ENCODE measurements at regions of chr12 and their contacts with region 1.

Region 1: DNA sequence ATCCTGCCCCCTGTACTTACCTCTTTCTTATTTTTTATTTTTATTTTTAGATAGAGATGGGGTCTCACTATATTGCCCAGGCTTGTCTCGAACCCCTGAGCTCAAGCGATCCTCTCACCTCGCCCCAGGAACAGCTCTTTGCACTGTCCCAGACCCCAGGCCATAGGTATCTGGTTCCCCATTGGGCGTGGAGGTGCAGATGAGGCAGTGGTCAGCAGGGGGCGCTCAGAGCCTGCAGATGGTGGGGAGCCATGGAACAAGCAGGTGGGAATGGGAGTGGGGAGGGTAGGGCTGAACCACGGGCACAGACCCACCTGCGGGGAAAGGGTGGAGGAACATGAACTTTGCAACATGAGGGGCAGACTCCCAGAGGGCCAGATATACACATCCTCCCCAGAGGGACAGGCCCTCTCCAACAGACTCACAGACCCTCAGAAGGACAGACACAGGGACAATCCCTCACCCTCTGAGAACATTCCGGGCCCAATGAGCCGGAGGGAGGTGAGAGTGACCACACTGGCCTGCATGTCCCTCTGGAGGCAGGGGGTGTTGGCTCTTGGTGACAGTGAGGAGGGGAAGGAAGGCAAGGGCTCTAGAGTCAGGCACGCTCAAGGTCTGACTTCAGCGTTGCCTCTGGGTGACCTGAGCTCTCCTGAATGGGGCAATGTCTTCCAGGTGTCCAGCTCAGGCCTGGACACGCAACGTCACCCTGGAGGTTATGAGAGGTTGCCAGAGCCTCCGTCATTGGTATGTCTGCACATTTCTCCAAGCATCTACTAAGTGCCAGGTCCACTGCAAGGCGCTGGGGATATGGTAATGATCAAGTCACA is 34.9 kb downstream of the KRT80 start:
- DNase-seq: no peak
- H3K4me3 ChIP-seq: no peak overlapping the region
- H3K27ac ChIP-seq: no peak overlapping the region
- H3K27me3 ChIP-seq: no peaks in the 10 kb centered on the region
- CTCF ChIP-seq: peak; percentile 96

Region 2: GRCh38 chr12:51827925-51828818 is 328.8 kb before region 1 on chr12:
- CTCF ChIA-PET with region 1: no interaction called
- POLR2A ChIA-PET with region 1: no interaction called
- DNase-seq: no peak
- H3K4me3 ChIP-seq: no peak overlapping the region
- H3K27ac ChIP-seq: no peak overlapping the region
- H3K27me3 ChIP-seq: peaks cover 6% of the 10 kb centered on the region
- CTCF ChIP-seq: no peak

Region 3: GRCh38 chr12:52221912-52222457 is 65.0 kb after region 1 on chr12:
- CTCF ChIA-PET with region 1: interaction called, 10 read pairs
- POLR2A ChIA-PET with region 1: no interaction called
- DNase-seq: no peak
- H3K4me3 ChIP-seq: no peak overlapping the region
- H3K27ac ChIP-seq: no peak overlapping the region
- H3K27me3 ChIP-seq: no peaks in the 10 kb centered on the region
- CTCF ChIP-seq: peak; percentile 48

Region 4: GRCh38 chr12:52327052-52327829 is 170.3 kb after region 1 on chr12:
- CTCF ChIA-PET with region 1: interaction called, 103 read pairs
- POLR2A ChIA-PET with region 1: no interaction called
- DNase-seq: peak; percentile 72
- H3K4me3 ChIP-seq: no peak overlapping the region
- H3K27ac ChIP-seq: no peak overlapping the region
- H3K27me3 ChIP-seq: peaks cover 38% of the 10 kb centered on the region
- CTCF ChIP-seq: peak; percentile 94

Region 5: GRCh38 chr12:52372216-52373154 is 215.5 kb after region 1 on chr12:
- CTCF ChIA-PET with region 1: interaction called, 53 read pairs
- POLR2A ChIA-PET with region 1: no interaction called
- DNase-seq: peak; percentile 72
- H3K4me3 ChIP-seq: no peak overlapping the region
- H3K27ac ChIP-seq: no peak overlapping the region
- H3K27me3 ChIP-seq: peaks cover 35% of the 10 kb centered on the region
- CTCF ChIP-seq: peak; percentile 89

Measured in AG04450 (cell line).